IMR-90 (cell line): ENCODE measurements at regions of chr12 and their contacts with region 1.

Region 1: GRCh38 chr12:123433615-123434014 is 2.9 kb downstream of the RILPL2 start:
- DNase-seq: no peak
- ATAC-seq: no peak
- H3K4me3 ChIP-seq: no peak overlapping the region
- H3K27ac ChIP-seq: no peak overlapping the region
- H3K4me1 ChIP-seq: peaks cover 4% of the 10 kb centered on the region; the same call in 1 of the 2 replicates
- H3K27me3 ChIP-seq: no peaks in the 10 kb centered on the region
- CTCF ChIP-seq: no peak
- POLR2A ChIP-seq: no peak
- RAD21 ChIP-seq: no peak

Region 2: DNA sequence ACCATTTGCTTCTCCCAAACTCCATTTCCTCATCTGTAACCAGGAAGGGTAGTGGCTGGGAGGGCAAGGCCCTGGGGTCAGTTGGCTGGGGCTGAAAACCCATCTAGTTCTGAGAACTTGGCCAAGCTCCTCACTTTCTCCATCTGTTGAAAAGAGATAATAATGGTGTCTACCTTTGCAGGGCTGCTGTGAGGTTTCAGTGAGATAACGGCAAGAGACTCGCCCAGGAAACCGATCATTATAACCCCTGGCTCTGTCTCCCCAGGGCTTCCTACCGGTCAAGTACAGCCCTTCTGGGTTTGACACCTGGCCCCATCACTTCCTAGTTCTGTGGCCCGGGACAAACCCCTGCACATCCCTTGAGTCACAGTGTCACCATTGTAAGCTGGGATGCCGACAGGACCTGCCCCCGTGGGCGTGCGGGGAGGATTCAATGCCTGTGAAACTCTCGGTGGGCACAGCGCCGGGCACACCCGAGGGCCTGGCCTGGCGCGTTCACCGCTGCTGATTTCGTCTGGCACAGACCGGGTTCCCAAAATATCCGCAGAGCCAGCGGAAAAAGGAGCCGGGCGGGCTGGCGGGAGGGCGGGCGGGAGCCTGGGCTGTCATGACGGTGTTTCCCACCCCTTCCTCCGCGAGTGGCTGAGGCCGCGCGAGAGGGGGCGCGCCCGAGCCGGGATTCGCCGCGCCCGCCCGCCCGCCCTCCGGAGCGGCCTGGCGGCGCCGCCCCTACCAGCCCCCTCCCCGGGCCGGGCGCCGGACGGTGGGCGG is 45.3 kb before region 1 on chr12:
- CTCF ChIA-PET with region 1: no interaction called
- POLR2A ChIA-PET with region 1: no interaction called
- dilution Hi-C with region 1: no loop called
- in situ Hi-C with region 1: no loop called
- intact Hi-C with region 1: loop called (anchors 5 kb)
- DNase-seq: peak; percentile 52
- ATAC-seq: peak; percentile 62
- H3K4me3 ChIP-seq: peak overlapping the region; percentile 99
- H3K27ac ChIP-seq: peak overlapping the region; percentile 85
- H3K4me1 ChIP-seq: peaks cover 13% of the 10 kb centered on the region
- H3K27me3 ChIP-seq: no peaks in the 10 kb centered on the region
- CTCF ChIP-seq: no peak
- POLR2A ChIP-seq: no peak
- RAD21 ChIP-seq: no peak

Region 3: DNA sequence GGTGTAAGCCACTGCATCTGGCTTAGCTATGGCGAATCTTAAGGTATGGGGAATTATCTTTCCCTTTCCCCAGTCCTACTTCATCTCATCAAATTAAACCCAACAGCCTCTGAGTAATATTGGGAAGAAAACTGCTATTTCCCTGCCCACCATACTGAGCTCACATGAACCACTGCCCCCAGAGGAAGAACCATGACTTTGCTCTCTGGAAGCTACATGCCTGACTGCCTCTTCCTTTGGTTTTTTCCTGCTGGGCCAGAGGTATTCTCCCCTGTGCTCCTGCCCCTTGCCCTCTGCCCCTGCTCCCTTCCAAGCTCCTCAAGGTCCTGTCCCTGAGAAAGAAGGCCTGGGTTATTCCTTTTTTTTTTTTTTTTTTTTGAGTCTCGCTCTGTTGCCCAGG is 12.3 kb before region 1 on chr12:
- CTCF ChIA-PET with region 1: no interaction called
- POLR2A ChIA-PET with region 1: interaction called, 20 read pairs
- dilution Hi-C with region 1: no loop called
- in situ Hi-C with region 1: no loop called
- intact Hi-C with region 1: no loop called
- DNase-seq: no peak
- ATAC-seq: no peak
- H3K4me3 ChIP-seq: no peak overlapping the region
- H3K27ac ChIP-seq: no peak overlapping the region
- H3K4me1 ChIP-seq: no peaks in the 10 kb centered on the region
- H3K27me3 ChIP-seq: no peaks in the 10 kb centered on the region
- CTCF ChIP-seq: no peak
- POLR2A ChIP-seq: no peak
- RAD21 ChIP-seq: no peak